Activated T-helper 1 cell treated with anti-CD3 and anti-CD28 coated beads, Interleukin-12 subunit alpha, Interleukin-12 subunit beta, Interleukin-2, Interleukin-4 antibody, amounts not matched to agents 30 ng/mL and 10 ng/mL and 1 ng/mL, durations not matched to agents 14 hours and 24 hours and 36 hours (primary cell): ENCODE measurements at regions of chr17 and their contacts with region 1.

Region 1: GRCh38 chr17:51120739-51121617 is at the start of gene SPAG9:
- DNase-seq: peak; percentile 93
- H3K4me3 Mint-ChIP-seq: peak within 1 kb of the TSS; percentile 97
- H3K27ac Mint-ChIP-seq: peak within 1 kb of the TSS; percentile 99
- H3K4me1 Mint-ChIP-seq: peaks cover 55% of the 10 kb centered on the region
- H3K27me3 Mint-ChIP-seq: peaks cover 2% of the 10 kb centered on the region
- total RNA-seq, gene SPAG9: 44.1 and 45.2 TPM in 2 replicates

Region 2: DNA sequence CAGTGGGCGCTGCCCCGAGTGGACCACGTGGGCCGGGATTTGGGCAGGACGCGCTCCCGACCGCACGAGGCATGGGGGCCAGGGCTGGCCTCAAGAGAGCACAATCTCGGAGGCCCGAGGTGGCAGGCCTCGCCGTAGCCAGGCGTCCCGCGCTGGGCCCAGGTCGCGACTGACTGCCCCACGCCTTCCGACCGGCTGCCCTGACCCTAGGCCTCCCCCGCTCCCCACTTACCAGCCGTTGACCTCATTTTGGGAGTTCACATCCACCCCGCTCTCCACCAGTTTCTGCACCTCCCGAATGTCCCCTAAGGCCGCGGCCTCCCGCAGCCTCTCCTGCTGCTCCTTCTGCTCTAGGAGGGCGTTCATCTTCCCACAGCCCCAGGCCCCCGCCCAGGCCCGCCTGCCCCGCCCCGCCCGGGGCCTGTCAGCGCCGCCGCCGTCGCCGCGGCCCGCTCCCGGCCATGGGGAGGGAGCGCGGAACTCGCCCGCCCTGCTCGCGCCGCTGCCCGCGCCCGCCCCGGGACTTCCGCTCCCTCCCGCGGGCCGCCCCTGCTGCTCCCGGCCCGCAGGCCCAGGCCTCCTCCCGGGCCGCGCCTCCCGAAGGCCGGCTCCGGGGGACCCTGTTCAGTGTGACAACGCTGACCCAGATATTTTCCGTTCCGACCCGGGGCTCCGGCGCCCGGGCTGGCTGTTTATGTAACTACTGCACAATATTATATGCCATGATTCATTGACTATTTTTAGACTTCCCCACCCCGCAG is 413.5 kb before region 1 on chr17 and contains the start of gene ANKRD40:
- intact Hi-C with region 1: loop called (anchors 1 kb)
- DNase-seq: peak; percentile 90
- H3K4me3 Mint-ChIP-seq: peak within 1 kb of the TSS; percentile 95
- H3K27ac Mint-ChIP-seq: peak within 1 kb of the TSS; percentile 97
- H3K4me1 Mint-ChIP-seq: peaks cover 40% of the 10 kb centered on the region
- H3K27me3 Mint-ChIP-seq: peaks cover 3% of the 10 kb centered on the region
- total RNA-seq, gene ANKRD40: 47.0 and 50.3 TPM in 2 replicates

Region 3: GRCh38 chr17:51029568-51030463 is 91.2 kb before region 1 on chr17:
- intact Hi-C with region 1: loop called (anchors 2 kb)
- DNase-seq: no peak
- H3K4me3 Mint-ChIP-seq: peak overlapping the region; percentile 59
- H3K27ac Mint-ChIP-seq: peak overlapping the region; percentile 79
- H3K4me1 Mint-ChIP-seq: peaks cover 45% of the 10 kb centered on the region
- H3K27me3 Mint-ChIP-seq: no peaks in the 10 kb centered on the region

Region 4: DNA sequence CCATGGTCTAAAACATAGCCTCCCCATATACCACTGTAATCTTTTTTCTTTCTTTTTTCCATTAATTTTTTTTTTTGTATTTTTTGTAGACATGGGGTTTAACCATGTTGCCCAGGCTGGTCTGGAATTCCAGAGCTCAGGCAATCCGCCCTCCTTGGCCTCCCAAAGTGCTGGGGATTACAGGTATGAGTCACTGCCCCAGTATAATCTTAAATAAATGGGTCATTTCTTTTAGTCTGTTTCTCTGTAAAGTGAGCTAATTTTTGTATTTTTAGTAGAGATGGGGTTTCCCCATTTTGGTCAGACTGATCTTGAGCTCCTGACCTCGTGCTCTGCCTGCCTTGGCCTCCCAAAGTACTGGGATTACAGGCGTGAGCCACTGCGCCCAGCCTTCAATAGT is 26.7 kb after region 1 on chr17:
- intact Hi-C with region 1: loop called (anchors 1 kb)
- DNase-seq: no peak
- H3K4me3 Mint-ChIP-seq: no peak overlapping the region
- H3K27ac Mint-ChIP-seq: peak overlapping the region; percentile 75
- H3K4me1 Mint-ChIP-seq: peaks cover 26% of the 10 kb centered on the region
- H3K27me3 Mint-ChIP-seq: no peaks in the 10 kb centered on the region

Region 5: GRCh38 chr17:51166197-51166986 is 45.4 kb after region 1 on chr17 and contains the start of gene NME2:
- intact Hi-C with region 1: loop called (anchors 1 kb)
- DNase-seq: peak; percentile 69
- H3K4me3 Mint-ChIP-seq: peak within 1 kb of the TSS; percentile 98
- H3K27ac Mint-ChIP-seq: peak within 1 kb of the TSS; percentile 98
- H3K4me1 Mint-ChIP-seq: peaks cover 32% of the 10 kb centered on the region
- H3K27me3 Mint-ChIP-seq: peaks cover 1% of the 10 kb centered on the region
- total RNA-seq, gene NME2: 664 and 674 TPM in 2 replicates